IMR-90 (cell line): ENCODE measurements at regions of chr3 and their contacts with region 1.

Region 1: GRCh38 chr3:192816351-192816750 is 89.0 kb upstream of the FGF12 start:
- DNase-seq: peak; percentile 73
- ATAC-seq: peak; percentile 7; the same call in 1 of the 2 replicates
- H3K4me3 ChIP-seq: no peak overlapping the region
- H3K27ac ChIP-seq: no peak overlapping the region
- H3K4me1 ChIP-seq: peaks cover 18% of the 10 kb centered on the region
- H3K27me3 ChIP-seq: no peaks in the 10 kb centered on the region
- CTCF ChIP-seq: peak; percentile 86
- POLR2A ChIP-seq: 0 out of 2 replicates have a peak, but pooled peaks have one; percentile 25
- RAD21 ChIP-seq: peak; percentile 87

Region 2: GRCh38 chr3:192887701-192888100 is 71.3 kb after region 1 on chr3:
- CTCF ChIA-PET with region 1: interaction called, 5 read pairs
- POLR2A ChIA-PET with region 1: no interaction called
- dilution Hi-C with region 1: no loop called
- in situ Hi-C with region 1: no loop called
- intact Hi-C with region 1: loop called (anchors 2 kb)
- DNase-seq: no peak
- ATAC-seq: no peak
- H3K4me3 ChIP-seq: no peak overlapping the region
- H3K27ac ChIP-seq: peak overlapping the region; percentile 28; the same call in 1 of the 2 replicates
- H3K4me1 ChIP-seq: peaks cover 25% of the 10 kb centered on the region
- H3K27me3 ChIP-seq: no peaks in the 10 kb centered on the region
- CTCF ChIP-seq: no peak
- POLR2A ChIP-seq: no peak
- RAD21 ChIP-seq: no peak

Region 3: DNA sequence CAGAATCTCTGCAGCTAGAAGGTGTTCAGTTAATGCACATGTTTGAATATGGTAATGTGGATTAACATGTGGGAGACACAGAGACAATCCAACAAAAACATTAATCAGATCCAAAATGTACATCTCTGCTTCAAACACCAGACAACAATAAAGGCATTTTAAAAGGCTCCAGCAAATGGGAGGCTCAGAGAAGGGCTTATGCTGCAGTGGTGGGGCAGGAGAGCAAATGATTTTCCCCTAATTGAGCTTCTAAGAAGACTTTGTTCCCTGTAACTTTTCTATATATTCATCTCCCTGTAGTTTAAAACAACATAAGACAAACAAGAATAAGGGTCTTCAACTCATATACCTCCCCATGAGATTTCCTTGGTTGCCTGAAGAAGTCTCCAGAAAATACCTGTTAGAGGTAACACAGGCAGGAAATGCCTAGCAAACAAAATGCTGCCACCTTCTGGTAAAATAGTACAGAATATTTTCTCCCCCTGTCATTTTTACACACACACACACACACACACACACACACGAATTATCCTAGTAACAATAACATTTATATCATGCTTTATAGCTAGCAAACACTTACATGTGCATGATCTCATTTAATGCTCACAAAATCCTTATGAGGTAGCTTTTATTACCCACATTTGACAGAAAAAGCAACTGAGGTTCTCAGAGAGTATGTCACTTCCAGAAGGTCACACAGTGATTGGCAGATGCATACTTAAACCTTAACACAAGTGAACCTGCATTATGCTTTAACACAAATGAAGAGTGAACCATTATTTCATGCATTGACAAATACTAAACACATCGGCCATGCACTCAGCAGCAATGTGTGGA is 224.7 kb after region 1 on chr3:
- CTCF ChIA-PET with region 1: interaction called, 42 read pairs
- POLR2A ChIA-PET with region 1: no interaction called
- dilution Hi-C with region 1: no loop called
- in situ Hi-C with region 1: loop called (anchors 5 kb)
- intact Hi-C with region 1: loop called (anchors 1 kb)
- DNase-seq: peak; percentile 60
- ATAC-seq: peak; percentile 56; the same call in 1 of the 2 replicates
- H3K4me3 ChIP-seq: no peak overlapping the region
- H3K27ac ChIP-seq: no peak overlapping the region
- H3K4me1 ChIP-seq: no peaks in the 10 kb centered on the region
- H3K27me3 ChIP-seq: no peaks in the 10 kb centered on the region; the same call in 1 of the 2 replicates
- CTCF ChIP-seq: peak; percentile 65
- POLR2A ChIP-seq: no peak
- RAD21 ChIP-seq: peak; percentile 77

Region 4: GRCh38 chr3:193465992-193466608 is 649.7 kb after region 1 on chr3:
- CTCF ChIA-PET with region 1: no interaction called
- POLR2A ChIA-PET with region 1: no interaction called
- dilution Hi-C with region 1: no loop called
- in situ Hi-C with region 1: loop called (anchors 10 kb)
- intact Hi-C with region 1: loop called (anchors 2 kb)
- DNase-seq: no peak
- ATAC-seq: no peak
- H3K4me3 ChIP-seq: no peak overlapping the region
- H3K27ac ChIP-seq: no peak overlapping the region
- H3K4me1 ChIP-seq: no peaks in the 10 kb centered on the region
- H3K27me3 ChIP-seq: no peaks in the 10 kb centered on the region
- CTCF ChIP-seq: no peak
- POLR2A ChIP-seq: no peak
- RAD21 ChIP-seq: no peak